ENCODE measurements at regions of chr3 and their contacts with region 1.

Region 1: DNA sequence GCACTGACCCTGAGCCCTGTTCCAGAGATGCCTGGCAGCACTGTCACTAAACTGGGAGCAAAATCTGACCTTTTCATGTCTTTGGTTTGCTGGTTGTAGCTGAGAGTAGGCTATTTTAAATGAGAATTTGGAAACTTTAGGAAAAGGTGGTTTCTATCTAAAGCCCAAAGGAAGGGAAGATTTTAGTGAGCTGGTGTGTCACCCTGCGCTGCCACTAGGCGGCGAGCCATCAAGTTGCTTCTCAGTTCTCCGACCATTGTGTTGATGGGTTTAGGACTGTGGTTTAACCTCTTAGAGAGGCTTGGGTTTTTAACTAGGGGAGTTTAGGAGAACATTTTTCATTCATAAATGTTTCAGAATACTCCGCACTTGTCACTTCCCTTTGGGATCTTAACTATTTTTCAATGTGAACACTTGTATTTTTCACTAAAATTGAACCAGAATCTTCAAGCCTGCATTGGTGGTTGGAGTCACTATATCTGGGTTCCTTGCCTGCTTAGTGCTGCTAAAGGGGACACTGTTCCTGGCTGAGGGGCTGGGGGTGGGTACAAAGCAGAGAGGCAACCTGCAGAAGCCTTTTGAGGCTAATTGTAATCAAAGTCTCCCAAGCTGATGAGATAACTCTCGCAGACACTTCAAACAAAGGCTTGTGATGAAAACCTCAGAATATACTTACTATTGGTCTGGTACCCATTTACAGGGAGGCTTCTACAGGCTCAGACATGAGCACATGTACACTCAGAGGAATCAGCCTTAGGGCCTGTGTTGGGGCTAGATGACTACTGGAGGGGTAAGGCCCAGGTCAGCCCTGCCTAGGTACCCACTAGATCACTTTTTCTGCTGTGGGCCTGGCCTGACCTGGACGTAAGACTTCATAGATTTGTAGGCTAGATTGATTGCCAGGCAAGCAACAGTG is 16.8 kb downstream of the EXOSC7 start:
- DNase-seq: no peak
- H3K4me3 ChIP-seq: no peak overlapping the region
- H3K27ac ChIP-seq: peak overlapping the region; percentile 22
- H3K27me3 ChIP-seq: no peaks in the 10 kb centered on the region
- CTCF ChIP-seq: peak; percentile 73

Region 2: DNA sequence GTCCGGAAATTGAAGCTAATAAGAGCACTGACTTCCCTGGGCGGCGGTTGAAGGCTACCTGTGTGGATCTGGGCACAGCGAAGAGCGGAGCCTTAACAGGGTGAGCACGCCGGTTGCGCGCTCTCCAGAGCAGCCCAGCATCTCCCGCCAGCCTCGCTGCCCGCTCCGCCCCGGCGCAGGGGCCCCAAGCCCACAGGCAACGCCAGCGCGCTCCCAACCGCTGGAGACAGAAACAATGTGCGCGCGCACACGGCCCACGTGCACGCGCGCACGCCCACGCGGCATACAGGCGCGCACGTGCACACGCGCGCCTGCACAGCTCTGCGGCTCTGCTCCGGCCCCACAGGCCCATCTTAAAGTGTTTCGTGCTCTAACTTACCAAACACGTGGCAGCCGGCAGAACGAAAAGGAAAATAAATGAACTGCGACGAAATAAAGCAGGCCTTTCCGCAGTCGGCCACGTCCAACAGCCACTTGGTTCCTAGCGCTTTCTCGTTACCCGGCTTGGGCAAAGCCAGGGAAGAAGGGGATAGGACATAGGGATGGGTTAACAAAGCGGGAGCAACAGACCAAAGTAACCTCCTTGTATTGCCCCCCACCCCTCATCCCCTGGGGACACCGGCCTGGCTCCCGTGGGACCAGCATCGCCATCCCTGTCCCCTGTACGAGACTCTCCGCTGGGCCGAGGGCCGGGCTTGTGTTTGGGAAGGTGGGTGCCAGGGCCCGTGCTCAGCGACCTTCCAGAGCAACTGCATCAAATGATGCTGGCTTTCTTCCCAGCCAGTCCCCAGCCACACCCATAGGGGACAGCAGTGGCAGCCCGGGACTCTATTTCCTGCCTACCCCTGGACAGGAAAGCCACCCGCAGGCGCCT is 1098.4 kb before region 1 on chr3:
- CTCF ChIA-PET with region 1: no interaction called
- POLR2A ChIA-PET with region 1: no interaction called
- DNase-seq: peak; percentile 61
- H3K4me3 ChIP-seq: peak overlapping the region; percentile 56
- H3K27ac ChIP-seq: peak overlapping the region; percentile 42
- H3K27me3 ChIP-seq: no peaks in the 10 kb centered on the region
- CTCF ChIP-seq: no peak

Region 3: GRCh38 chr3:44960387-44961026 is 32.3 kb before region 1 on chr3:
- CTCF ChIA-PET with region 1: no interaction called
- POLR2A ChIA-PET with region 1: no interaction called
- DNase-seq: no peak
- H3K4me3 ChIP-seq: no peak overlapping the region
- H3K27ac ChIP-seq: no peak overlapping the region
- H3K27me3 ChIP-seq: no peaks in the 10 kb centered on the region
- CTCF ChIP-seq: no peak

Region 4: GRCh38 chr3:44976002-44976815 is 16.6 kb before region 1 on chr3 and contains the starts of genes EXOSC7 and ZDHHC3:
- CTCF ChIA-PET with region 1: interaction called, 47 read pairs
- POLR2A ChIA-PET with region 1: interaction called, 8 read pairs
- DNase-seq: peak; percentile 49
- H3K4me3 ChIP-seq: peak within 1 kb of the TSS; percentile 96
- H3K27ac ChIP-seq: peak within 1 kb of the TSS; percentile 68
- H3K27me3 ChIP-seq: no peaks in the 10 kb centered on the region
- CTCF ChIP-seq: no peak
- polyA plus RNA-seq, gene EXOSC7: 62.5 and 70.6 TPM in 2 replicates
- polyA plus RNA-seq, gene ZDHHC3: 92.7 and 124 TPM in 2 replicates